PC-9 (cell line): ENCODE measurements at regions of chr10 and their contacts with region 1.

Region 1: DNA sequence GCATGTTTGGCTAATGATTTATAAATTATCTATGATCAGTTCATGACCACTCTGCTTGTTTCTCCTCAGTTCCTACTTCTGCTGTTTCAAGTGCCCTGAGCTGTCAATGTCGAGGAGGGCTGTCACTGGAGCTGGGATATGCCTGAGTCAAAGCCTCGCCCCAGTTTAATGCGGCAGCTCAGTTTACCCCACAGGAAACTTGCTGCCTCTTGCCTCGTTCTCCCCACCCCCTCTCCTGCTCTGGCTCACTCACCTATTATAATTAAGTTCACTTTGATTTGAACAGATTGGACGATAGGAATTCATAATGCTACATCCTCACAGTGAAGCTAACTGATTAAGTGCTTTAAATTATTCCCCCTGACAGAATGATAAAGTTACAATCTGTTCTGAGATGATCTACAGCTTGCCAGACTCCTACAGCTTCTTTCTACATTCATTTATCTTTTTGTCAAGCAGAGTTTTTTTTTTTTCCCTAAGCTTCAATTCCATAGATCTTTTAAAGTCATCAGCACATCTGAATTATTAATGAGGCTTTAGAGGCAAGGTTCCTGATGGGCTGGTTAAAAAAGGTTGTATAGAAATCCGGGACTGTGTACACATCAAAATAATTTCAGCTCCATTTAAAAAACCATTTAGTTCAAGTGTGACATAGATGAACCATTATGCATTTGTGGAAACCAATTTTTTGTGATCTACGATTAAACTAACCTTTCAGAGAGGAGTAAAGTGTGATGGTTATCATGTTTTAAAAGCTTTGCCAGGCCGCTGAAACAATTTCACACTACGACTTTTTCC is 758.3 kb downstream of the KCNMA1 start:
- DNase-seq: no peak
- H3K4me3 ChIP-seq: no peak overlapping the region
- H3K27ac ChIP-seq: no peak overlapping the region
- H3K4me1 ChIP-seq: no peaks in the 10 kb centered on the region
- H3K27me3 ChIP-seq: peaks cover 41% of the 10 kb centered on the region; the same call in 1 of the 2 replicates
- CTCF ChIP-seq: no peak

Region 2: GRCh38 chr10:76950354-76950753 is 71.0 kb after region 1 on chr10:
- CTCF ChIA-PET with region 1: no interaction called
- POLR2A ChIA-PET with region 1: interaction called, 13 read pairs
- intact Hi-C with region 1: no loop called
- DNase-seq: no peak
- H3K4me3 ChIP-seq: no peak overlapping the region
- H3K27ac ChIP-seq: no peak overlapping the region
- H3K4me1 ChIP-seq: no peaks in the 10 kb centered on the region
- H3K27me3 ChIP-seq: peaks cover 31% of the 10 kb centered on the region; the same call in 1 of the 2 replicates
- CTCF ChIP-seq: no peak

Region 3: DNA sequence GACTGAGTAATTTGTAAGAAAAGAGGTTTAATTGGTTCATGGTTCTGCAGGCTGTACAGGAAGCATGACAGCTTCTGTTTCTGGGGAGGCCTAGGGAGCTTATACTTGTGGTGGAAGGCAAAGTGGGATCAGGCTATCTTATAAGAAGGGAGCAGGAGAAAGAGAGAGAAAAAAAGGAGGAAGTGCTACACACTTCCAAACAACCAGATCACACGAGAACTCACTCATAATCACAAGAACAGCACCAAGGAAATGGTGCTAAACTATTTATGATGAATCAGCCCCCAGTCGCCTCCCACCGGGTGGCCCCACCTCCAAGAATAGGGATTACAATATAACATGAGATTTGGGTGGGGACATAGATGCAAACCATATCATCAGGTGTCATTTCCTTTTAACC is 847.4 kb after region 1 on chr10:
- CTCF ChIA-PET with region 1: no interaction called
- POLR2A ChIA-PET with region 1: no interaction called
- intact Hi-C with region 1: no loop called
- DNase-seq: no peak
- H3K4me3 ChIP-seq: no peak overlapping the region
- H3K27ac ChIP-seq: no peak overlapping the region
- H3K4me1 ChIP-seq: no peaks in the 10 kb centered on the region
- H3K27me3 ChIP-seq: no peaks in the 10 kb centered on the region
- CTCF ChIP-seq: no peak